GM12878 (cell line): ENCODE measurements at regions of chr21 and their contacts with region 1.

Region 1: GRCh38 chr21:36727866-36728265 is 29.0 kb downstream of the SIM2 start:
- DNase-seq: no peak
- ATAC-seq: no peak
- H3K4me3 ChIP-seq: no peak overlapping the region
- H3K27ac ChIP-seq: no peak overlapping the region
- H3K4me1 ChIP-seq: no peaks in the 10 kb centered on the region
- H3K27me3 ChIP-seq: no peaks in the 10 kb centered on the region; a peak in 2 of 4 replicates
- CTCF ChIP-seq: no peak
- EP300 ChIP-seq: no peak
- POLR2A ChIP-seq: no peak
- RAD21 ChIP-seq: no peak

Region 2: GRCh38 chr21:36429947-36430546 is 297.8 kb before region 1 on chr21:
- CTCF ChIA-PET with region 1: no interaction called
- POLR2A ChIA-PET with region 1: no interaction called
- RAD21 ChIA-PET with region 1: no interaction called
- SMC1A ChIA-PET with region 1: no interaction called
- in situ Hi-C with region 1: no loop called
- intact Hi-C with region 1: loop called (anchors 10 kb)
- DNase-seq: peak; percentile 59
- ATAC-seq: peak; percentile 95
- H3K4me3 ChIP-seq: peak overlapping the region; percentile 42; the same call in 1 of the 2 replicates
- H3K27ac ChIP-seq: no peak overlapping the region
- H3K4me1 ChIP-seq: no peaks in the 10 kb centered on the region; the same call in 1 of the 2 replicates
- H3K27me3 ChIP-seq: no peaks in the 10 kb centered on the region
- CTCF ChIP-seq: peak; percentile 6 to 12 (median 9); a peak in 1 of 6 replicates
- EP300 ChIP-seq: no peak
- POLR2A ChIP-seq: peak; percentile 76
- RAD21 ChIP-seq: no peak

Region 3: GRCh38 chr21:36749935-36750578 is 22.2 kb after region 1 on chr21:
- CTCF ChIA-PET with region 1: no interaction called
- POLR2A ChIA-PET with region 1: no interaction called
- RAD21 ChIA-PET with region 1: no interaction called
- SMC1A ChIA-PET with region 1: no interaction called
- in situ Hi-C with region 1: no loop called
- intact Hi-C with region 1: no loop called
- DNase-seq: no peak
- ATAC-seq: no peak
- H3K4me3 ChIP-seq: no peak overlapping the region
- H3K27ac ChIP-seq: no peak overlapping the region
- H3K4me1 ChIP-seq: no peaks in the 10 kb centered on the region
- H3K27me3 ChIP-seq: peaks cover 7 to 8% of the 10 kb centered on the region in 2 experiments
- CTCF ChIP-seq: no peak
- EP300 ChIP-seq: no peak
- POLR2A ChIP-seq: no peak
- RAD21 ChIP-seq: no peak